Sciatic nerve (tissue), 2 donors: ENCODE measurements at regions of chr7 and their contacts with region 1.

Region 1: GRCh38 chr7:47846117-47846836 is 102.0 kb downstream of the PKD1L1 start:
- DNase-seq: no peak
- ATAC-seq: no peak

Region 2: DNA sequence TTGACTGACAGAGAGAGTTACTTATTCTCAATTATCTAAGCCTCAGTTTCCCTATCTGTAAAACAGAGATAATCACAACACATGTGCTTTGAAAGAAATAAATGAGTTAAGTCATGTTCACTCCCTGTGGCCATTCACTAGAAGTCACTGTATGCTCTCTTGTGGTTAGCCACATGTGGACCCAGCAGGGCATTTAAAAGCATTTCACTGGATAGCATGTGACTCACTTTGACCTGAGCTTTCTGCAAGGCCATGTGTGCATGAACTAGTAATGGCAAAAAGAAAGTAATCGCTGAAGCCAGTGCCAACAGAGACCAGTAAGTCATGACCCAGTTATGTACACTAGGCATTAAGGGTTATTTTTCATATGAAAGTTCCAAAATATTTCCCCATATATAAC is 1368.2 kb before region 1 on chr7:
- intact Hi-C with region 1: loop called (anchors 5 kb)
- DNase-seq: no peak
- ATAC-seq: no peak